Activated naive CD4-positive, alpha-beta T cell treated with anti-CD3 and anti-CD28 coated beads for 36 hours (primary cell): ENCODE measurements at regions of chr6 and their contacts with region 1.

Region 1: DNA sequence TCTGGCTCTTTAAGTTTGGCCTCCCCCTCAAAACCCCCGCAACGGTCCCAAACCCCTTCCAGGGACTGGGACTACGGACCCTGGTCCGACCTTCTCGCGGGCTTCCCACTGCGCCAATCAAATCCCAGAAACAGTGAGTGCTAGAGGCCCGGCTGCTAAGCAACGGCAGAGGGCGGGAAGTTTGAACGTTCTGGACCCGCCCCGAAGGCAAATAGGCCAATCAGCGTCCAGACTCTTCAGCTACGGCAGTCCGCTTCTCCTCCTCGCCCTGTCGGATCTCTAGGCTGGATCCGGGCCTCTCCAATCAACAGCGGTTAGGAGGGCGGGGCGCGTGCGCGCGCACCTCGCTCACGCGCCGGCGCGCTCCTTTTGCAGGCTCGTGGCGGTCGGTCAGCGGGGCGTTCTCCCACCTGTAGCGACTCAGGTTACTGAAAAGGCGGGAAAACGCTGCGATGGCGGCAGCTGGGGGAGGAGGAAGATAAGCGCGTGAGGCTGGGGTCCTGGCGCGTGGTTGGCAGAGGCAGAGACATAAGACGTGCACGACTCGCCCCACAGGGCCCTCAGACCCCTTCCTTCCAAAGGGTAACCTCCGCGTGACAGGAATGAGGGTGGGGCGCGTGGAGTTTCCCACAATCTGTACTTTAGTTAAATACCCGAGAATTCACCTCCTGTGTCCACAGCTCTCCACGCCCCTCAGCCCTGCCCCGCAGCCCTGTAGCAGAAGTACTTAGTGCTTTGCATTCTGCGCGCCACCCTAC is at the start of gene MSH5:
- DNase-seq: peak; percentile 99
- H3K4me3 Mint-ChIP-seq: peak within 1 kb of the TSS; percentile 95
- H3K27ac Mint-ChIP-seq: peak within 1 kb of the TSS; percentile 93
- H3K4me1 Mint-ChIP-seq: peaks cover 45% of the 10 kb centered on the region
- H3K27me3 Mint-ChIP-seq: no peaks in the 10 kb centered on the region
- total RNA-seq, gene MSH5: 101 to 105 TPM

Region 2: DNA sequence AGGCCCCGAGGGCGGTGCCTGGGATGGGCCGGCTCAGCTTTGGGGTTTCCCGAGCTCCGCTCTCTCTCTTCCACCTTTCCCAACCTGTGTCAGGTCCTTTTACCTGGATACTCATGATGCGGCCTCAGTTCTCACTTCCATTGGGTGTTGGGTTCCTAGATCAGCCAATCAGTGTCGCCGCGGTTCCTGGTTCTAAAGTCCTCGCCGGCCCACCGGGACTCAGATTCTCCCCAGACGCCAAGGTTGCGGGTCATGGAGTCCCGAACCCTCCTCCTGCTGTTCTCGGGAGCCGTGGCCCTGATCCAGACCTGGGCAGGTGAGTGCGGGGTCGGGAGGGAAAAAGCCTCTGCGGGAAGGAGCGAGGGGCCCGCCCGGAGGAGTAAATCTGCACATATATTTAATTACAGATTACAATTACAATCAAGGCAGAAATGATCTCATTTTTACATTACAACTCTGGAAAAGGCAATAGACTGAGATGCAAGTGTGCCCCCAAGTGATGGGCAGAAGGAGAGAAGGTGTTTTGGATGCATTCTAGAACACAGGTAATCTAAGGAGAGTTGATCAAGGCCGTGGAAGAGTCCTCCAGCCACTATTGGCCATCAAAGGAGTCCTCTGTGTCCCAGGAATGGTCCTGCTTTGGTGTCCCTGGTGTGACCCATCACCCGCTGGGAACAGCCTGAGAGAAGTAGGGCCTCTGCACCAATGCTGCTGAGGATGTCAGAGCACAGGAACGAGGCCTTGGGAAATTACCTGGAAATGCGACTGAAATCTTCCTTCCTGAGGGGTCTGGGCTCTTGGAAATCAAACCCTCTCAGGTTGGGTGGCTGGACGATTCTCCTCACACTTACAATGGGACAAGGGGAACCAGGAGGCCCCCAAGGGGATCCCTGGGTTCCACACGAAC is 276.6 kb before region 1 on chr6:
- CTCF ChIA-PET with region 1: no interaction called
- intact Hi-C with region 1: no loop called
- DNase-seq: peak; percentile 96
- H3K4me3 Mint-ChIP-seq: peak overlapping the region; percentile 99
- H3K27ac Mint-ChIP-seq: peak overlapping the region; percentile 98
- H3K4me1 Mint-ChIP-seq: peaks cover 58% of the 10 kb centered on the region
- H3K27me3 Mint-ChIP-seq: no peaks in the 10 kb centered on the region

Region 3: GRCh38 chr6:31597006-31597405 is 142.8 kb before region 1 on chr6:
- CTCF ChIA-PET with region 1: interaction called, 15 read pairs
- intact Hi-C with region 1: no loop called
- DNase-seq: peak; percentile 56
- H3K4me3 Mint-ChIP-seq: no peak overlapping the region
- H3K27ac Mint-ChIP-seq: peak overlapping the region; percentile 77
- H3K4me1 Mint-ChIP-seq: peaks cover 43% of the 10 kb centered on the region
- H3K27me3 Mint-ChIP-seq: no peaks in the 10 kb centered on the region

Region 4: GRCh38 chr6:31680840-31681671 is 58.8 kb before region 1 on chr6 and contains the start of gene LY6G5C:
- CTCF ChIA-PET with region 1: interaction called, 12 read pairs
- intact Hi-C with region 1: loop called (anchors 1 kb)
- DNase-seq: peak; percentile 85
- H3K4me3 Mint-ChIP-seq: peak within 1 kb of the TSS; percentile 74
- H3K27ac Mint-ChIP-seq: no peak within 1 kb of the TSS
- H3K4me1 Mint-ChIP-seq: peaks cover 11% of the 10 kb centered on the region
- H3K27me3 Mint-ChIP-seq: no peaks in the 10 kb centered on the region
- total RNA-seq, gene LY6G5C: 0.93 to 1.4 TPM

Region 5: GRCh38 chr6:31776989-31777666 is 37.3 kb after region 1 on chr6 and contains the start of gene VWA7:
- CTCF ChIA-PET with region 1: interaction called, 4 read pairs
- intact Hi-C with region 1: loop called (anchors 2 kb)
- DNase-seq: peak; percentile 80
- H3K4me3 Mint-ChIP-seq: no peak within 1 kb of the TSS
- H3K27ac Mint-ChIP-seq: peak within 1 kb of the TSS; percentile 63
- H3K4me1 Mint-ChIP-seq: peaks cover 35% of the 10 kb centered on the region
- H3K27me3 Mint-ChIP-seq: no peaks in the 10 kb centered on the region
- total RNA-seq, gene VWA7: 0.69 to 0.89 TPM

Region 6: DNA sequence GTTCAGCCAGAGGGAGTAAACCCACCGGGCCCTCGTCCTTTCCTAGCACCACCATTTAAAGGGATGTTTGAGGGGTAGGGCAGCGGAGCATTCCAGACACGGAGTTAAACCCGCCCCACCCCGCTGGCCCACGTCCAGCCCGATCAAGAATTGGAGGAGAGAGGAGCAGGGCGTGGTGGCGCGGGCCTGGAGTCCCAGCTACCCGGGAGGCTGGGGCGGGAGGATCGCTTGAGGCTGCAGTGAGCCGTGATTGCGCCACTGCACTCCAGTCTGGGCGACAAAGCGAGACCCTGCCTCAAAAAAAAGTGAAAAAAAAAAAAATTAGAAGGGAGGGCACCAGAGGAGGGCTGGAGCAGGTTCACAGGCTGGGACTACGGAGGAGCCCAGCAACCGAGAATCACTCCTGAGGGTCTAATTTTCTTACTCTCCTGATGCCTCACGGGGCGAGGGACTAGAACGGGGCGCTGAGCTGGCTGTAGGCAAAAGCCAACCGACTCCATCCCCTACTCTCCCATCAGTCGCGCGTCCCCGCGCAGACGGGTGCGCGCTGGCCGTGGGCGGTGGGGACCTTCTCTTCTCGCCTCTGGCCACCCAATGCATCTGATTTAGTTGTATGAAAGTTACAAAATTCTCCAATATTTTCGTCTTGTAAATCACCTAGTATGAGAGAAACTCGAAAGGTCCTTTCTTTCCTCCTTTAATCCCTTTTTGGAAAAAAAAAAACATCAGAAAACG is 81.7 kb after region 1 on chr6:
- CTCF ChIA-PET with region 1: no interaction called
- intact Hi-C with region 1: no loop called
- DNase-seq: peak; percentile 67
- H3K4me3 Mint-ChIP-seq: peak overlapping the region; percentile 78
- H3K27ac Mint-ChIP-seq: peak overlapping the region; percentile 92
- H3K4me1 Mint-ChIP-seq: peaks cover 59% of the 10 kb centered on the region
- H3K27me3 Mint-ChIP-seq: no peaks in the 10 kb centered on the region

Region 7: DNA sequence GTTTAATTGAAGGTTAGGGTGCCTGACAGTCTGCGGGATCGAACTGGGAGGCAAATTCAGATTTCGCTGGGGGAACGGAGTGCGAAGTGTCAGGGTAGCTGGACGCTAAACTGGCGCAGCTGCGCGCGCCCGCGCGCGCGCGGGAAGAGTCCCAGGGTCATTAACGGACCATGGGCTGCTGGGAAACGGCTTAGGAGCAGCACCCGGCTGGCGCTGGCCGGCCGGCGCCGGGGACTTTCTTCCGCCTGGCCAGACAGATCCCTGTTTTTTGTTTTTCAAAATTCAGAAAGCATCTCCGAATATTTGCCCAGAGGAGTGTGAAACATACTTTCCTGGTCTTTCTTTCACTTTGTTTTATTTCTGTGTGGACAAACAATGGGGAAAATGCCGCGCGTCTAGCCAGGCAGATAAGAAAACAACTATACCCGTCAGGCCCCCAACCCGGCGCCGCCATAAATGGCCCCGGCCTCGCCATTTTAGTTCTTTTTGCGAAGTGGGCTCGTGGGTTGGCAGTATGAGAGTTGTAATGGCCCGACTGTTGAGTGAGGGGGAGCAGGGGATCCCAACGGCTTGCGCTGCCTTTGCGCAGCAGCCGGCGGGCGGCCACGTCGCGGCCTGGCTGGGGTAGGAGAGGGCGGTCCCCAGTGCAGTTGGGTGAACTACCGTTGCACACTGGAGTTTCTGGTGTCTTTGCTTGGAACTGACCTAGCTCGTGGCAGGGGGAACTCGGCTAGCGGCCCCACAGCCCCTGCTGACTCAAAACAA is 94.8 kb after region 1 on chr6:
- CTCF ChIA-PET with region 1: interaction called, 6 read pairs
- intact Hi-C with region 1: loop called (anchors 1 kb)
- DNase-seq: peak; percentile 80
- H3K4me3 Mint-ChIP-seq: peak overlapping the region; percentile 94
- H3K27ac Mint-ChIP-seq: peak overlapping the region; percentile 98
- H3K4me1 Mint-ChIP-seq: peaks cover 46% of the 10 kb centered on the region
- H3K27me3 Mint-ChIP-seq: no peaks in the 10 kb centered on the region

Region 8: GRCh38 chr6:32190054-32190851 is 450.4 kb after region 1 on chr6 and contains the start of gene PBX2:
- CTCF ChIA-PET with region 1: no interaction called
- intact Hi-C with region 1: loop called (anchors 5 kb)
- DNase-seq: peak; percentile 93
- H3K4me3 Mint-ChIP-seq: peak within 1 kb of the TSS; percentile 95
- H3K27ac Mint-ChIP-seq: peak within 1 kb of the TSS; percentile 99
- H3K4me1 Mint-ChIP-seq: peaks cover 66% of the 10 kb centered on the region
- H3K27me3 Mint-ChIP-seq: no peaks in the 10 kb centered on the region
- total RNA-seq, gene PBX2: 46.5 to 47.7 TPM